ENCODE measurements at regions of chr9 and their contacts with region 1.

Region 1: DNA sequence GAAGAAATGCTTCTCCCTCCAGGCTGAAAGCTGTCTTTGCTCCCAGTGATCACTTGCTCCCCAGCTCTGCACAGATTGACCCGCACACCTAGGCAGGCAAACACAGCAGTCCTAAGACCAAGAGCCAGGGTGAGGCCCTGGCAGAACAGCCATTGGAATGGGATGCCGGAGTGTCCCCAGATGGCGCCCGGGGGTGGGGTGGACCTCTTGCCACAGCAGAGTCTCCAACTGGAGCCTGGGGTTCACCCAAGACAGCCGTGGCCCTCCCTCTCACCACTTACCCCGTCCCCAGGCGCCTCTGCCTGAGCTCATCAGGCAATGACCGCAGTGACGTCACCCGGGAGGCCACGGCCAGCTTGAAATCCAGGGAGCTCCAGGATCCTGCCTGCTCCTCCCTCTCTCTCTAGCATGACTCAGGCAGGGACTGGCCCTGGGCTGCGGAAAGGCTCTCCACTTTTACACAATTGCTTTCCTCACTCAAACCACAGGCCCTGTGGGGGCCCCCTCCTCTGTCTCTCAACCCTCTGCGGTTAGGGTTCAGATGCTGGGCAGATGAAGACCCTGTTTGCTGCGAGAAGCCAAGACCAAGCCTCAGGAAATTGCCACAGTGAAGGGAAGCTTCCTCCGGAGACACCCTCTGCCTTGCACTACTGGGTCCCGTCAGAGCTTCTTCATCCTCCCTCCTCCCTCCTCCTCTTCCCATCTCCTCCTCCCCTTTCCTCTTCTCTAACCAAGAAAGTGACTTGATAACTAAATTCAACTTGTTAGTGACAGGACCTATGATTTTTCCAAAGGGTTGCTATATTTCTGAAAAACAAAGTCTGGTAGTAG is 24.3 kb upstream of the PTGES start:
- DNase-seq: peak; percentile 99
- H3K4me3 ChIP-seq: no peak overlapping the region
- H3K27ac ChIP-seq: peak overlapping the region; percentile 26
- H3K4me1 ChIP-seq: peaks cover 27% of the 10 kb centered on the region
- H3K27me3 ChIP-seq: no peaks in the 10 kb centered on the region
- CTCF ChIP-seq: no peak

Region 2: GRCh38 chr9:129676975-129677841 is 99.9 kb before region 1 on chr9:
- CTCF ChIA-PET with region 1: no interaction called
- dilution Hi-C with region 1: loop called (anchors 5 kb)
- in situ Hi-C with region 1: no loop called
- intact Hi-C with region 1: no loop called
- DNase-seq: no peak
- H3K4me3 ChIP-seq: no peak overlapping the region
- H3K27ac ChIP-seq: no peak overlapping the region
- H3K4me1 ChIP-seq: no peaks in the 10 kb centered on the region
- H3K27me3 ChIP-seq: peaks cover 10% of the 10 kb centered on the region
- CTCF ChIP-seq: no peak

Region 3: DNA sequence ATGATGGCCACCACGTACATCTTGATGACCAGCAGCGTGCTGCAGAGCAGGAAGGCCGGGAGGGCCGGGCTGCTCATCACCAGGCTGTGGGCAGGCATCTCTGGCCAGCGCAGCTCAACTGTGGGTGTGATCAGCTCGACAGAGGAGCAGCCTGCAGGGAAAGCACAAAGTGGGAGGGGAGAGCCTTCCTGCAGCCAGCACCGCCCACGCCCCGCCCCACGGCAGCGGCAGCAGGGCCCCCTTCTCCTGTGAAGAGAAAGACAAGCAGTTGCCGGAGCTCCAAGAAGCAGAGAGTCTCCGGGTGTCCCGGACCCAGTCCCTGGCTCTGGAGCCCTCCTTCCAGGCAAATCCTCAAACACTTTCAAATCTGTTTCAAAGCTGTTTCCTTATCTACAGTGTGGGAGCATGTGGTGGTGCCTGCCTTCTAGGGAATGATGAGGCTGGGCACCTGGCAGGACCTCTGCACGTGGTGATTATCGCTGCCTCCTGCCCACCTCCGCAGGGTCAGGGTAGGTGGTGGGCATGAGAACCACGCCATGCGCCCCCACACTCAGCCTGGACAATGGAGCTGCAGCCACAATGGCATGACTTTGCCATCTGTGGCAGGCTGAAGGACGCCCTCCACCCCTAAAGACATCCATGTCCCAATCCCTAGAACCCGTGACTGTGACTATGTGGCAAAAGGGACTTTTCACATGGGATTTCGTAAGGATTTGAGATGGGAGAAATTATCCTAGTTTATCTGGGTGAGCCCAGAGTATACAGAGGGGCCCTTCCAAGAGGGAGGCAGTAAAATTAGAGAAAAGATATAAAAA is 24.0 kb before region 1 on chr9 and contains the start of gene PTGES:
- CTCF ChIA-PET with region 1: no interaction called
- dilution Hi-C with region 1: no loop called
- in situ Hi-C with region 1: no loop called
- intact Hi-C with region 1: loop called (anchors 1 kb)
- DNase-seq: peak; percentile 84
- H3K4me3 ChIP-seq: peak within 1 kb of the TSS; percentile 51 to 72 (median 56)
- H3K27ac ChIP-seq: peak within 1 kb of the TSS; percentile 57
- H3K4me1 ChIP-seq: peaks cover 52% of the 10 kb centered on the region
- H3K27me3 ChIP-seq: peaks cover 3% of the 10 kb centered on the region
- CTCF ChIP-seq: no peak
- total RNA-seq, gene PTGES: 6.2 to 57.2 TPM

Region 4: GRCh38 chr9:129761901-129762364 is 15.2 kb before region 1 on chr9:
- CTCF ChIA-PET with region 1: no interaction called
- dilution Hi-C with region 1: no loop called
- in situ Hi-C with region 1: no loop called
- intact Hi-C with region 1: loop called (anchors 1 kb)
- DNase-seq: no peak
- H3K4me3 ChIP-seq: no peak overlapping the region
- H3K27ac ChIP-seq: no peak overlapping the region
- H3K4me1 ChIP-seq: peaks cover 17% of the 10 kb centered on the region
- H3K27me3 ChIP-seq: no peaks in the 10 kb centered on the region
- CTCF ChIP-seq: no peak

Region 5: DNA sequence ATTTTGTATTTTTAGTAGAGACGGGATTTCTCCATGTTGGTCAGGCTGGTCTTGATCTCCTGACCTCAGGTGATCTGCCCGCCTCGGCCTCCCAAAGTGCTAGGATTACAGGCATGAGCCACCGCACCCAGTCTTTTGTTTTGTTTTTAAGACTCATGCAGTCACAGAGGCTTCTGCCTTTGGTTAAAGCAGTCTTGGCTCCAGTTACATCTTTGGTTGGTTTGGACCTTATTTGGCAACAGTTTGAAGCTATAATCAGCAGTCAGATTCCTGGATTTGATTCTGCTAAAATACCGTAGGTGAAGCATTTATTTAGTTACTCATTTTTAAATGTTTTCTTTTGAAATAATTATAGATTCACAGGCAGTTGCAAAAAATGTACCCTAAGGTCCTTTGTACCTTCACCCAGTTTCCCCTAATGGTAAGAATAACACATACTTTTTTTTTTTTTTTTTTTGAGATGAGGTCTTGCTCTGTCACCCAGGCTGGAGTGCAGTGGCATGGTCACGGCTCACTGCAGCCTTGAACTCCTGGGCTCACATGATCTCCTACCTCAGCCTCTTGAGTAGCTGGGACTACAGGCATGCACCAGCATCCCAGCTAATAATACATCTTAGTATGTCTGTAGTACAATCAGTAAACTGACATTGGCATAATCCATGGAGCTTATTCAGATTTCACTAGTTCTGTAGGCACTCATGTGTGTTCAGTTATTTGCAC is 73.8 kb after region 1 on chr9:
- CTCF ChIA-PET with region 1: no interaction called
- dilution Hi-C with region 1: no loop called
- in situ Hi-C with region 1: no loop called
- intact Hi-C with region 1: no loop called
- DNase-seq: no peak
- H3K4me3 ChIP-seq: no peak overlapping the region
- H3K27ac ChIP-seq: no peak overlapping the region
- H3K4me1 ChIP-seq: no peaks in the 10 kb centered on the region
- H3K27me3 ChIP-seq: no peaks in the 10 kb centered on the region
- CTCF ChIP-seq: no peak

Region 6: GRCh38 chr9:129884220-129885017 is 107.3 kb after region 1 on chr9:
- CTCF ChIA-PET with region 1: no interaction called
- dilution Hi-C with region 1: no loop called
- in situ Hi-C with region 1: no loop called
- intact Hi-C with region 1: no loop called
- DNase-seq: peak; percentile 65
- H3K4me3 ChIP-seq: peak overlapping the region in 2 of 3 experiments; percentile 15 to 45
- H3K27ac ChIP-seq: no peak overlapping the region
- H3K4me1 ChIP-seq: peaks cover 22% of the 10 kb centered on the region
- H3K27me3 ChIP-seq: no peaks in the 10 kb centered on the region
- CTCF ChIP-seq: no peak